Activated B cell treated with CpG ODN at 0.5 μM for 24 hours (primary cell): ENCODE measurements at regions of chr1 and their contacts with region 1.

Region 1: GRCh38 chr1:21189906-21190500 is 13.3 kb upstream of the EIF4G3 start:
- DNase-seq: no peak
- ATAC-seq: no peak
- H3K4me3 Mint-ChIP-seq: no peak overlapping the region
- H3K27ac Mint-ChIP-seq: no peak overlapping the region
- H3K4me1 Mint-ChIP-seq: peaks cover 5% of the 10 kb centered on the region
- H3K27me3 Mint-ChIP-seq: peaks cover 5% of the 10 kb centered on the region
- CTCF ChIP-seq: no peak

Region 2: GRCh38 chr1:21764615-21765423 is 574.8 kb after region 1 on chr1:
- CTCF ChIA-PET with region 1: no interaction called
- POLR2A ChIA-PET with region 1: interaction called, 10 read pairs
- intact Hi-C with region 1: no loop called
- DNase-seq: no peak
- ATAC-seq: no peak
- H3K4me3 Mint-ChIP-seq: no peak overlapping the region
- H3K27ac Mint-ChIP-seq: peak overlapping the region; percentile 57
- H3K4me1 Mint-ChIP-seq: peaks cover 75% of the 10 kb centered on the region
- H3K27me3 Mint-ChIP-seq: no peaks in the 10 kb centered on the region
- CTCF ChIP-seq: no peak